Activated CD4-positive, alpha-beta memory T cell treated with anti-CD3 and anti-CD28 coated beads for 36 hours (primary cell): ENCODE measurements at regions of chr20 and their contacts with region 1.

Region 1: GRCh38 chr20:22691369-22692118 is 107.2 kb upstream of the FOXA2 start:
- DNase-seq: peak; percentile 61
- H3K4me3 Mint-ChIP-seq: no peak overlapping the region
- H3K27ac Mint-ChIP-seq: no peak overlapping the region
- H3K4me1 Mint-ChIP-seq: no peaks in the 10 kb centered on the region
- H3K27me3 Mint-ChIP-seq: peaks cover 1% of the 10 kb centered on the region

Region 2: GRCh38 chr20:22586645-22587310 is 104.8 kb before region 1 on chr20:
- CTCF ChIA-PET with region 1: no interaction called
- POLR2A ChIA-PET with region 1: no interaction called
- intact Hi-C with region 1: no loop called
- DNase-seq: peak; percentile 13
- H3K4me3 Mint-ChIP-seq: no peak overlapping the region
- H3K27ac Mint-ChIP-seq: no peak overlapping the region
- H3K4me1 Mint-ChIP-seq: no peaks in the 10 kb centered on the region
- H3K27me3 Mint-ChIP-seq: peaks cover 40% of the 10 kb centered on the region

Region 3: GRCh38 chr20:22729180-22729579 is 37.6 kb after region 1 on chr20:
- CTCF ChIA-PET with region 1: no interaction called
- POLR2A ChIA-PET with region 1: no interaction called
- intact Hi-C with region 1: no loop called
- DNase-seq: no peak
- H3K4me3 Mint-ChIP-seq: no peak overlapping the region
- H3K27ac Mint-ChIP-seq: no peak overlapping the region
- H3K4me1 Mint-ChIP-seq: no peaks in the 10 kb centered on the region
- H3K27me3 Mint-ChIP-seq: no peaks in the 10 kb centered on the region

Region 4: DNA sequence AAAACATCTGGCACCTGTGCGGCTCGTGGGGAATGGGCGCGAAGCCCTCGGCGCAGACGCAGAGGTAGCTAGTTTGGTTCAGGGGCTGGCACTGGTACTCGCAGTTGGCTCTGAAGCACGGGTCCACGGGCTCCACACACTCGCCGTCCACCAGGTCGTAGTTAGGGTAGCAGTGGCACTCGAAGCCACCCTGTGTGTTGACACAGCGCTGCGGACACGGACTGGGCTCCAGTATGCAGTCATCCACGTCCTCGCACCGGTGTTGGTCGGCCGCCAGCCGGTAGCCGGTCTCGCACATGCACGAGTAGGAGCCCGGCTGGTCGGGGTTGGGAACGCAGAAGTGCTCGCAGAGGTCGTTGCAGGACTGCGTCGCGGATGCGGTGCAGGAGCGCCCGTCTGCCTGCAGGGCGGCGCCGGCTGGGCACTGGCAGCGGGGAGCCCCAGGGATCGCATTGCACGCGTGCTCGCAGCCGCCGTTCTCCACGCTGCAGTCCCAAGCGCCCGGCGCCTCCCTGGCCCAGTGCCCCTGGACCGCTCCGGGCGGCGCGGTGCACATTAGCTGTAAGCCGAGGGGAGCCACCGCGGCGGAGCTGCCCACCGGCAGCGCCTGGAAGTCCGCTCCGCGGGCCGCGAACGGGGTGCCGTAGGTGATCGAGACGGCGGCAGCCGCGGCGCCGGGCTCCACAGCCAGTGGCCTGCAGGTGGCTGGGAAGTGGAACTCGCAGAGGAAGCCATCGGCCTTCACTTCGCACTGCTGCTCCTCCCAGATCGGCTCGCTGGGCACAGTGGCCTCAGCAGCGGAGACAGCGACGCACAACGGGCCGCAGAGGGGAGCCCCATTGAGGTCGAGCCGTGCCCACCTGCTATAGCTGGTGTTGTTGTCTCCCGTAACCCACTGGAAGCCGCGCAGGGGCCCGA is 357.0 kb after region 1 on chr20:
- CTCF ChIA-PET with region 1: interaction called, 3 read pairs
- POLR2A ChIA-PET with region 1: no interaction called
- intact Hi-C with region 1: loop called (anchors 10 kb)
- DNase-seq: peak; percentile 37
- H3K4me3 Mint-ChIP-seq: no peak overlapping the region
- H3K27ac Mint-ChIP-seq: no peak overlapping the region
- H3K4me1 Mint-ChIP-seq: no peaks in the 10 kb centered on the region
- H3K27me3 Mint-ChIP-seq: peaks cover 39% of the 10 kb centered on the region

Region 5: DNA sequence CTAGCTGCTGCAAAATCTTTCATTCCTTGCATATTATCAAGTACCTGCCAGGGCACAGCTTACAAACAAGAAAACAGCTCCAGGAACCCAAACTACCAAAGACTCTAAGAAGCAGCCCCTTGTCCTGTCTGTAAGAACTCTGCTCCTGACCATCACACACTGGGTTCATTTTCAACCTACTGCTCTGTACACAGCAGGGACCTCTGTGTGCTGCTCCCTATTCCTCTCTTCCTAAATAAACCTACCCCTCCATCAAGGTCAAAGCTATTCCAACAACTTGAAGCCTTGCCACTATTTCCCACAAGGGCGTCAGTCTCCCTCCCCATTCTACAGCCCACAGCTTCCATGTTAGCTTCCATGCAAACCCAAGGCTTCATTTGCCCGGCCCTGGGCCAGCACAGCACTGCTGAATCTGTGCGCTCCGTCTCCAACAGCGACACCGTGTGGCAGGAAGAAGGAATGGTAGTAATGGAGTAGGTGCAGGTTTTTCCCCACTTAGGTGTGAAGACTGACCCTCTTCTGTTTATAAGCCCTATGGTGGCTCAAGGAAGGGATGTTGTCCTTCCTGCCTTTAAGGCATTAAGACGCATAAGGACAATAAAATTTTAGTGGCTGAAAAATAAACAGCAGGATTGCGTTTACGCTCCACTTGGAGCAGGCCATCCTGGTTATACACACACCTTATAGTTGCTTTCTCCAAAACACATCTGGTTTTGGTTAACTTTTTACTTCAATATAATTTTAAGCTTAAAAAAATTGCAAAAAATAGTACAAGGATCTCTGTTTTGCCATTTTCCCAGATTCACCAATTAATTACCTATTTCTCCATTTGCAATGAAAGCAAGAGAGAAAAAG is 543.9 kb after region 1 on chr20:
- CTCF ChIA-PET with region 1: interaction called, 12 read pairs
- POLR2A ChIA-PET with region 1: no interaction called
- intact Hi-C with region 1: no loop called
- DNase-seq: peak; percentile 53
- H3K4me3 Mint-ChIP-seq: no peak overlapping the region
- H3K27ac Mint-ChIP-seq: no peak overlapping the region
- H3K4me1 Mint-ChIP-seq: no peaks in the 10 kb centered on the region
- H3K27me3 Mint-ChIP-seq: peaks cover 2% of the 10 kb centered on the region

Region 6: DNA sequence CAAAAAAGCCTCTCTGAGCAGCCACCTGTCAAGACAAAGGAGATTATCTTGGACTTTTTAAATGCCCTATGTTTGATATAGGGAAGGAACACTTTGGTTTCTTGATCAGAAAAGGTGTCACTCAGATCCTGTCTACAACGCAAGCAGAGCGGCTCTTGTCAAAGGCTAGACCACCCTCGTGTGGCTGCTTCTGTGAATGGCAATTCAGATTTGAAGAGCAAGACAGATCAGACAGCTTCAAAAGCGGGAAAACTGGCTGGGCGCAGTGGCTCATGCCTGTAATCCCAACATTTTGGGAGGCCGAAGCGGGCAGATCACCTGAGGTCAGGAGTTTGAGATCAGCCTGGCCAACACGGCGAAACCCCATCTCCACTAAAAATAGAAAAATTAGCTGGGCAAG is 649.0 kb after region 1 on chr20:
- CTCF ChIA-PET with region 1: interaction called, 18 read pairs
- POLR2A ChIA-PET with region 1: no interaction called
- intact Hi-C with region 1: loop called (anchors 2 kb)
- DNase-seq: peak; percentile 49
- H3K4me3 Mint-ChIP-seq: no peak overlapping the region
- H3K27ac Mint-ChIP-seq: no peak overlapping the region
- H3K4me1 Mint-ChIP-seq: no peaks in the 10 kb centered on the region
- H3K27me3 Mint-ChIP-seq: no peaks in the 10 kb centered on the region

Region 7: DNA sequence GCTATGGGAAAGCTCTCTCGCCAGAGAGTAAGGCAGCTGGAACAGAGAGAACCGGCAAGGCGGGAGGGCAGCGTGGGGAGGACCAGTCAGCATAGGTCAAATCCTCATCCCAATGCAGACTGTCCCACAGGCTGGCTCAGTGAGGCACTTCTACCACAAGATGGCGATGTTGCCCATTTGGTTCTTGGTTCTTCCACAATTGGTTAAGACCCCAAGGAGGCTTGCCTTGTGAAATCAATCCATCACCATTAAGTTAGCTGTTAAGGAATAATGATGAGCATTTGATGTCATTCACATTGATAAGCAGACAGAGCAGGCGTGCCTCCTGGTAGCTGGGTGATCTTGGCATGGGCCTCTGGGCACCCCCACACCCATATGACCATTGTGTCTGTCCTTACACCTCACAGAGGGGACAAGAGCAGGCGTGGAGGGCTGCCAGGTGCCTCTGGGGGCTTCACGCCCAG is 750.3 kb after region 1 on chr20:
- CTCF ChIA-PET with region 1: interaction called, 10 read pairs
- POLR2A ChIA-PET with region 1: no interaction called
- intact Hi-C with region 1: loop called (anchors 10 kb)
- DNase-seq: peak; percentile 69
- H3K4me3 Mint-ChIP-seq: no peak overlapping the region
- H3K27ac Mint-ChIP-seq: no peak overlapping the region
- H3K4me1 Mint-ChIP-seq: no peaks in the 10 kb centered on the region
- H3K27me3 Mint-ChIP-seq: peaks cover 1% of the 10 kb centered on the region

Region 8: DNA sequence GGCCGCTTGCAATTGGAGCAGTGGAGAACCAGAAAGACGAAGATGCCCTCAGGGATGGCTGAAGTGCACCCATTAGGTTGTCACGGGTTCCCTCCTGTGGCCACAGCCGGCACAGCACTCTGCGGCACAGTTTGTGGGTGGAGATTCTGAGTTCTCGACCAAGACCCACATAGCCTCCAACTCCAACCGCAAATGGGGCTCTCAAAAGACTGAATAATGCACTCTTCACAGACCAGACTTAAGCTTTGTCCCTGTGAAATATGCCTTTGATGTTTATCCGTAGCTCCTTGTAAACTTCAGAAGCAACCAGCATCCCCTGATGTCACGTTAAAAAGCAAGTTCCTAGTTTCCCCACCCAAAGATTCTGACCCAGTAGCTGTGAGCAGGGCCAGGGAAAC is 915.1 kb after region 1 on chr20:
- CTCF ChIA-PET with region 1: interaction called, 5 read pairs
- POLR2A ChIA-PET with region 1: no interaction called
- intact Hi-C with region 1: loop called (anchors 5 kb)
- DNase-seq: peak; percentile 74
- H3K4me3 Mint-ChIP-seq: no peak overlapping the region
- H3K27ac Mint-ChIP-seq: no peak overlapping the region
- H3K4me1 Mint-ChIP-seq: no peaks in the 10 kb centered on the region
- H3K27me3 Mint-ChIP-seq: no peaks in the 10 kb centered on the region